IMR-90 (cell line): ENCODE measurements at regions of chr1 and their contacts with region 1.

Region 1: GRCh38 chr1:22930235-22930912 is 42.3 kb downstream of the LACTBL1 start:
- DNase-seq: peak; percentile 17
- ATAC-seq: peak; percentile 96
- H3K4me3 ChIP-seq: no peak overlapping the region
- H3K27ac ChIP-seq: no peak overlapping the region
- H3K4me1 ChIP-seq: no peaks in the 10 kb centered on the region
- H3K27me3 ChIP-seq: peaks cover 43% of the 10 kb centered on the region
- CTCF ChIP-seq: peak; percentile 92
- POLR2A ChIP-seq: no peak
- RAD21 ChIP-seq: peak; percentile 90

Region 2: GRCh38 chr1:22451702-22452474 is 478.5 kb before region 1 on chr1 and contains the start of gene ZBTB40:
- CTCF ChIA-PET with region 1: no interaction called
- POLR2A ChIA-PET with region 1: no interaction called
- dilution Hi-C with region 1: no loop called
- in situ Hi-C with region 1: loop called (anchors 25 kb)
- intact Hi-C with region 1: no loop called
- DNase-seq: peak; percentile 98
- ATAC-seq: peak; percentile 94
- H3K4me3 ChIP-seq: peak within 1 kb of the TSS; percentile 70
- H3K27ac ChIP-seq: peak within 1 kb of the TSS; percentile 88
- H3K4me1 ChIP-seq: peaks cover 5% of the 10 kb centered on the region
- H3K27me3 ChIP-seq: no peaks in the 10 kb centered on the region
- CTCF ChIP-seq: no peak
- POLR2A ChIP-seq: no peak; the same call in 1 of the 2 replicates
- RAD21 ChIP-seq: no peak
- total RNA-seq, gene ZBTB40: 8.9 and 9.7 TPM in 2 replicates

Region 3: DNA sequence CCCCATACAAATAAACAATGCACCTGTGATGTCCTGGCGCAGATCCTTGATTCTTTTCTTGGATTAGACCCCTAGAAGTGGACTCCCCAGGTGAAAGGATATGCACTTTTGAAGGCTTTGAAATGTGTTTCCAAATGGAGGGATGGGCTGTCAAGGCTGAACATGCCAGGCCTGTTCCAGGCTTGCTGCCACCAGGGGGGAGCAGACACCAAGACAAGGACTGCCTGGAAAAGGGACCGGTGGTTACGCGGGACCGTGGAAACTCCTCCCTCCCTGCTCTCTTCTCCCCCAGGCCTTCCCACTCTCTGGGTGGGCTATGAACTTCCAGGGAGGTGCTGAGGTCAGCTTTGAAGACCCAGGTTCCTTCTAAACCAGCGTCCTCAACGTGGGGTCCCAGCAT is 264.6 kb before region 1 on chr1:
- CTCF ChIA-PET with region 1: interaction called, 4 read pairs
- POLR2A ChIA-PET with region 1: no interaction called
- dilution Hi-C with region 1: no loop called
- in situ Hi-C with region 1: no loop called
- intact Hi-C with region 1: loop called (anchors 1 kb)
- DNase-seq: peak; percentile 43
- ATAC-seq: peak; percentile 87
- H3K4me3 ChIP-seq: no peak overlapping the region
- H3K27ac ChIP-seq: no peak overlapping the region
- H3K4me1 ChIP-seq: no peaks in the 10 kb centered on the region
- H3K27me3 ChIP-seq: peaks cover 76% of the 10 kb centered on the region
- CTCF ChIP-seq: peak; percentile 69
- POLR2A ChIP-seq: no peak
- RAD21 ChIP-seq: peak; percentile 88